Left ventricle myocardium inferior (tissue), 1 donor: ENCODE measurements at regions of chr17 and their contacts with region 1.

Region 1: GRCh38 chr17:70144260-70144846 is 25.0 kb upstream of the KCNJ2 start:
- DNase-seq: no peak
- H3K4me3 ChIP-seq: no peak overlapping the region
- H3K27ac ChIP-seq: no peak overlapping the region
- H3K4me1 ChIP-seq: no peaks in the 10 kb centered on the region
- H3K27me3 ChIP-seq: no peaks in the 10 kb centered on the region
- CTCF ChIP-seq: peak; percentile 77

Region 2: GRCh38 chr17:69575346-69575761 is 569.0 kb before region 1 on chr17:
- intact Hi-C with region 1: loop called (anchors 10 kb)
- DNase-seq: no peak
- H3K4me3 ChIP-seq: no peak overlapping the region
- H3K27ac ChIP-seq: peak overlapping the region; percentile 61
- H3K4me1 ChIP-seq: peaks cover 20% of the 10 kb centered on the region
- H3K27me3 ChIP-seq: no peaks in the 10 kb centered on the region
- CTCF ChIP-seq: no peak

Region 3: GRCh38 chr17:69607162-69607834 is 537.1 kb before region 1 on chr17:
- intact Hi-C with region 1: loop called (anchors 10 kb)
- DNase-seq: peak; percentile 77
- H3K4me3 ChIP-seq: no peak overlapping the region
- H3K27ac ChIP-seq: peak overlapping the region; percentile 84
- H3K4me1 ChIP-seq: peaks cover 40% of the 10 kb centered on the region
- H3K27me3 ChIP-seq: no peaks in the 10 kb centered on the region
- CTCF ChIP-seq: peak; percentile 90